Sigmoid colon (tissue), 7 donors: ENCODE measurements at regions of chr5 and their contacts with region 1.

Region 1: DNA sequence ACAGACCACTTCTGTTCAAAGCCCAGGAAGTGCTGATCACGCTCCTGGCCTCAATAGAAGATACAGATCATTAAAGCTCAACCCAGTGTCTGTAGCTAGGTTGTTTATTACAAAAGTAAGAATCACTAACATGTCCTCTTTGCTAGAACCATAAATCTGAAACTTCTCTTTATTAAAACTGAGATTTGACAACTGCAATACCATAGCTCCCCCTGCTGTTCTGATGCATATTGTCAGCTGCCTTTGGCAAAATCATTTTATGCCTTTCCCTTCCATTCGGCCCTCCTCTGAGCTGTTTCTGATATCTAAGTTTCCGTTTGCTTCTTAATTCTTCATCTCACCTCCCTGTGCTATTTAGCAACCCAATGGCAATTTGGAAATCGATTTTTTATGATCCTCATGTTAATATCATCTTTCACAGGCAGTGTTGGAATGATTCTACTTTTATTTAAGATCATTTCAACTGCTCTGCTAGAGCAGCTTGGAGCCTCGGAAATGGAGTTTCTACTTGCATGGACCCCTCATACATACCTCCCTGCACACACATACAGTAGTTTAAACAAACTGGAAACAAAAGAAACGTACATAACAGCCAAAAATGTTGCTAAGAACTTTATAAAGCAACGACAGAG is 998.8 kb downstream of the MAT2B start:
- DNase-seq: no peak
- H3K4me3 ChIP-seq: peak overlapping the region in 1 of 4 donors; percentile 14
- H3K27ac ChIP-seq: no peak overlapping the region
- H3K4me1 ChIP-seq: peaks cover 0 to 6% (median 0%) of the 10 kb centered on the region in 4 donors
- H3K27me3 ChIP-seq: no peaks in the 10 kb centered on the region
- CTCF ChIP-seq: peak; percentile 14 to 76 (median 64)
- EP300 ChIP-seq: no peak
- POLR2A ChIP-seq: no peak

Region 2: GRCh38 chr5:163695830-163696578 is 808.3 kb before region 1 on chr5:
- intact Hi-C with region 1: loop called (anchors 5 kb)
- DNase-seq: no peak
- H3K4me3 ChIP-seq: no peak overlapping the region
- H3K27ac ChIP-seq: no peak overlapping the region
- H3K4me1 ChIP-seq: no peaks in the 10 kb centered on the region
- H3K27me3 ChIP-seq: no peaks in the 10 kb centered on the region
- CTCF ChIP-seq: peak in 3 of 4 experiments; percentile 32 to 64 (median 41)
- EP300 ChIP-seq: no peak
- POLR2A ChIP-seq: no peak

Region 3: DNA sequence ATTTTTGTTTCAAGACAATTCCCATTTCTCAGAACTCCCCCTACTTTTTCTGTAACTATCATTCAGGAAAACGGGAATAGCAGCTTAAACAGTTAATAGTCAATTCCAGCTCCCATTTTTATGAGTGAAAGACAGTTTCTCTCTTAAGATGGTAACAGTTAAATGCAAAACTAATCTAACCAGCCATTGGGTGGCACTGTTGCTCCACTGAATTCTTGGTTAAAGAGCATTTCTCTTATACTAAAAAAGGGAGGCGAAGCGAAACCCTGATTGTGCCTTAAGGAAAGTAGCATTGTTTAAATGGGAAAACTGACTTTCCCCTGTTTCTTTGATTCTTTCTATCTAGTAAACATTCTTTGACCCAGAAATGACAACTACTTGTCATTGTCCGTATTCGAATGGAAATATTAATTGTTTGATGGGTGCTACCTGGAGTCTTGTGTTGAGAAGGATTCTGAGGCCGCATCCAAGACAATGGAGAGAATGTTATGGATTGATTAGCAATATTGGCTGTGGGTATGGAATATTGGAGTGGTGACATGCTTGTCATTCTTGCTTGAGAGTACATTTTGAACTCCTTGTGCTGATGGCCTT is 491.1 kb before region 1 on chr5:
- intact Hi-C with region 1: loop called (anchors 1 kb)
- DNase-seq: peak; percentile 69
- H3K4me3 ChIP-seq: no peak overlapping the region
- H3K27ac ChIP-seq: no peak overlapping the region
- H3K4me1 ChIP-seq: peaks cover 0 to 17% (median 0%) of the 10 kb centered on the region in 4 donors
- H3K27me3 ChIP-seq: no peaks in the 10 kb centered on the region
- CTCF ChIP-seq: peak; percentile 24 to 73 (median 63)
- EP300 ChIP-seq: no peak
- POLR2A ChIP-seq: no peak

Region 4: GRCh38 chr5:164636456-164636855 is 132.2 kb after region 1 on chr5:
- intact Hi-C with region 1: no loop called
- DNase-seq: no peak
- H3K4me3 ChIP-seq: no peak overlapping the region
- H3K27ac ChIP-seq: no peak overlapping the region
- H3K4me1 ChIP-seq: no peaks in the 10 kb centered on the region
- H3K27me3 ChIP-seq: no peaks in the 10 kb centered on the region
- CTCF ChIP-seq: no peak
- EP300 ChIP-seq: no peak
- POLR2A ChIP-seq: no peak